Naive thymus-derived CD4-positive, alpha-beta T cell (primary cell): ENCODE measurements at regions of chr5 and their contacts with region 1.

Region 1: GRCh38 chr5:82351754-82352145 is 73.6 kb upstream of the RPS23 start:
- DNase-seq: peak in 7 of 9 donors; percentile 8 to 54 (median 46)
- ATAC-seq: peak; percentile 73
- H3K4me3 ChIP-seq: no peak overlapping the region
- H3K4me3 Mint-ChIP-seq: no peak overlapping the region
- H3K27ac ChIP-seq: no peak overlapping the region
- H3K27ac Mint-ChIP-seq: peak overlapping the region in 1 of 9 donors; percentile 24
- H3K4me1 ChIP-seq: peaks cover 5 to 6% of the 10 kb centered on the region in 2 donors
- H3K4me1 Mint-ChIP-seq: peaks cover 3 to 58% (median 3%) of the 10 kb centered on the region in 7 donors
- H3K27me3 ChIP-seq: no peaks in the 10 kb centered on the region
- H3K27me3 Mint-ChIP-seq: no peaks in the 10 kb centered on the region

Region 2: GRCh38 chr5:81006947-81007636 is 1344.7 kb before region 1 on chr5:
- CTCF ChIA-PET with region 1: no interaction called
- POLR2A ChIA-PET with region 1: no interaction called
- intact Hi-C with region 1: loop called in 1 of 2 experiments (anchors 10 kb)
- DNase-seq: peak in 8 of 9 donors; percentile 48 to 91 (median 88)
- ATAC-seq: peak; percentile 95
- H3K4me3 ChIP-seq: peak overlapping the region; percentile 53
- H3K4me3 Mint-ChIP-seq: peak overlapping the region; percentile 75 to 95 (median 89)
- H3K27ac ChIP-seq: peak overlapping the region; percentile 80
- H3K27ac Mint-ChIP-seq: peak overlapping the region; percentile 92 to 100 (median 95)
- H3K4me1 ChIP-seq: peaks cover 35 to 64% of the 10 kb centered on the region in 2 donors
- H3K4me1 Mint-ChIP-seq: peaks cover 45 to 93% (median 80%) of the 10 kb centered on the region in 7 donors
- H3K27me3 ChIP-seq: no peaks in the 10 kb centered on the region
- H3K27me3 Mint-ChIP-seq: no peaks in the 10 kb centered on the region

Region 3: DNA sequence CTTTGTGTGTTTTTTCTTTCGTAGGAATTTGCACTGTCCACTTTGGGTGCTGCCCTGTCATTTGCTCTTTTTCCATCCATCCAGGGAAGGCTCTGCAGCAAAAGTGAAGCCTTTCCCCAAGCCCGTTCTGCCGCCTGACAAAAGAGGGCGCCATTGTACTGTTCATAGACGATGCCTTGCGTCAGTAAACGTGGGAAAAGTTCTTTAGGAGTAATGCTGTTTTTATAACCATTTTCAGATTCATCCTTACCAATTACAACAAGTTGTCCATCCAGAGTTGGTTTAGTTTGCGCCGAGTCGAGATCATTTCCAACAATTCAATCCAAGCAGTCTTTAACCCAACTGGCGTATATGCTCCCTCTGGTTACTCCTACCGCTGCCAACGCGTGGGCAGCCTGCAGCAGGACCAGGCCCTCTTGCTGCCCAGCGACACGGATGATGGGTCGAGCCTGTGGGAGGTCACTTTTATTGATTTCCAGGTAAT is 39.3 kb before region 1 on chr5:
- CTCF ChIA-PET with region 1: no interaction called
- POLR2A ChIA-PET with region 1: no interaction called
- intact Hi-C with region 1: loop called in 1 of 2 experiments (anchors 1 kb)
- DNase-seq: peak in 4 of 9 donors; percentile 5 to 52 (median 6)
- ATAC-seq: no peak
- H3K4me3 ChIP-seq: no peak overlapping the region
- H3K4me3 Mint-ChIP-seq: no peak overlapping the region
- H3K27ac ChIP-seq: no peak overlapping the region
- H3K27ac Mint-ChIP-seq: no peak overlapping the region
- H3K4me1 ChIP-seq: no peaks in the 10 kb centered on the region
- H3K4me1 Mint-ChIP-seq: peaks cover 0 to 7% (median 0%) of the 10 kb centered on the region in 7 donors
- H3K27me3 ChIP-seq: no peaks in the 10 kb centered on the region
- H3K27me3 Mint-ChIP-seq: peaks cover 0 to 4% (median 0%) of the 10 kb centered on the region in 5 donors

Region 4: GRCh38 chr5:82641331-82642003 is 289.7 kb after region 1 on chr5:
- CTCF ChIA-PET with region 1: no interaction called
- POLR2A ChIA-PET with region 1: no interaction called
- intact Hi-C with region 1: loop called (anchors 1 kb)
- DNase-seq: peak in 5 of 9 donors; percentile 11 to 33 (median 18)
- ATAC-seq: peak; percentile 70
- H3K4me3 ChIP-seq: no peak overlapping the region
- H3K4me3 Mint-ChIP-seq: no peak overlapping the region
- H3K27ac ChIP-seq: no peak overlapping the region
- H3K27ac Mint-ChIP-seq: no peak overlapping the region
- H3K4me1 ChIP-seq: no peaks in the 10 kb centered on the region
- H3K4me1 Mint-ChIP-seq: peaks cover 0 to 19% (median 0%) of the 10 kb centered on the region in 7 donors
- H3K27me3 ChIP-seq: no peaks in the 10 kb centered on the region
- H3K27me3 Mint-ChIP-seq: peaks cover 0 to 6% (median 0%) of the 10 kb centered on the region in 5 donors

Region 5: DNA sequence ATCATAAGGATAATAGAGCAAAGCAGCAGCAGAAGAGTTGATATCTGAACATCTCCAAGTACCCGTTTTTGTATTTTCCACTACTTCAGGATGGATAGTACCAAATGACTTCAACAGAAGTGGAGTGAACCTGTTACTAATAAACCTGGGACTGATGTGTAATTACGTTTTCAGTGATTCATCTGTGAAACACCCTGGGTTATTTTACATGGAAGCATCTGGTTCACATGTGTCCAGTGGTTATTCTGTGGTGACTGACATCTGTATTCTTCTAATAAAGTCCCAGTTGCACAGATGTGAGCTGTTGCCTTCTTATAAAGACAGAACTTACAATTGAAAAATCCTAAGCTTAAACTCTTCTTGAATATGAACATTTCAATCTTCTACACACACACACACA is 980.1 kb after region 1 on chr5:
- CTCF ChIA-PET with region 1: no interaction called
- POLR2A ChIA-PET with region 1: no interaction called
- intact Hi-C with region 1: loop called in 1 of 2 experiments (anchors 10 kb)
- DNase-seq: no peak
- ATAC-seq: no peak
- H3K4me3 ChIP-seq: no peak overlapping the region
- H3K4me3 Mint-ChIP-seq: no peak overlapping the region
- H3K27ac ChIP-seq: no peak overlapping the region
- H3K27ac Mint-ChIP-seq: no peak overlapping the region
- H3K4me1 ChIP-seq: no peaks in the 10 kb centered on the region
- H3K4me1 Mint-ChIP-seq: no peaks in the 10 kb centered on the region
- H3K27me3 ChIP-seq: no peaks in the 10 kb centered on the region
- H3K27me3 Mint-ChIP-seq: peaks cover 0 to 2% (median 0%) of the 10 kb centered on the region in 5 donors

Region 6: DNA sequence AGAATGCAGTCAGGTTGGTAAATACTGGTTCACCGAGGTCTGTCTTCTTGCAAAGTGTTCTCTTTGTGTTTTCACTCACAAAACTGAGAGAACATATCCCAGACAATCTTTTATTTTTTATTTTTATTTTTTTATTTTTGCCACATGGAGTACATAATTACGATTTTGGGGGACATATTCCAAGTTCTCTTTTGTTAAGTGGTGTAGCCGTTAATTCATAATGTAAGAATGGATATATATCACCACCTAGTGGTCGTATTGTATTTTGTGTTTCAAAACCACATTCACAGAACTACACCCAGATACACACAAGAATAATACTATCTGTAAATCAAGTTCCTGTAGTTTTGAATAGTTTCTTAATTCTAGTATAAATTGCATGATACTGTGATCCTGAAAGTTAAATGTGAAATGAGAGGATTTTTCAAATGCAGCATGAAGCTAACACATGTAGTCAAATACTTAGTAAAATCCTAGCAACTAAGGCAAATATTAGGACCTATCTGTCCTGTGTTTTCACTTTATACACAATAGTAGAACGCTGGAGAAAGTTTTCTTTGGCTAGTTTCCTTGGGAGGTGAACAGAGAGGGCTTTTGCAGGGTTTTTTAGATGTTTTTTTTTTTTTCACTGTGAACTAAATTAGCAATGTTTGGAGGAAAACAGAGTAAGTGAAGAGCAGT is 1212.5 kb after region 1 on chr5:
- CTCF ChIA-PET with region 1: interaction called, 16 read pairs
- POLR2A ChIA-PET with region 1: no interaction called
- intact Hi-C with region 1: loop called (anchors 1 kb)
- DNase-seq: peak in 5 of 9 donors; percentile 27 to 40 (median 31)
- ATAC-seq: peak; percentile 42
- H3K4me3 ChIP-seq: no peak overlapping the region
- H3K4me3 Mint-ChIP-seq: no peak overlapping the region
- H3K27ac ChIP-seq: no peak overlapping the region
- H3K27ac Mint-ChIP-seq: no peak overlapping the region
- H3K4me1 ChIP-seq: no peaks in the 10 kb centered on the region
- H3K4me1 Mint-ChIP-seq: no peaks in the 10 kb centered on the region
- H3K27me3 ChIP-seq: peaks cover 0 to 4% of the 10 kb centered on the region in 2 donors
- H3K27me3 Mint-ChIP-seq: peaks cover 18 to 34% (median 27%) of the 10 kb centered on the region in 5 donors